Right cardiac atrium (tissue), 5 donors: ENCODE measurements at regions of chr4 and their contacts with region 1.

Region 1: DNA sequence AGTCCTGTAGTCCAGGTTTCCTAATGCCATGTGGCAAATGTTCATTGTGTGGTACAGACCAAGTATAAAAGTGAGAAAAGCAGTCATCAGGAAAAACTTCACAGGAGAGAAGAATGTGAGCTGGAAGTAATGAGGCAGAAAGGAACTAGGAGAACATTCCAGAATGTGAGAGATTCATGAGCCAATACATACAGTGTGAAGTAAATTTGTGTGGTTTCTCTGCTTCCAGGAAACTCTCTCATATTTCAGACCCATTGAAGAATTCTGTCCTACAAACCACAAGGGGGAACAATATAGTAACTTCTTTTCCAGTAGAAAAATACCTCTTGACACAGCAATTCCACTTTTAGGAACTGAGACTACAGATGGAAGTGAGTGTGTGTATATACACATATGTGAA is 136.5 kb downstream of the RNF150 start:
- DNase-seq: no peak
- ATAC-seq: no peak
- H3K4me3 ChIP-seq: no peak overlapping the region
- H3K27ac ChIP-seq: no peak overlapping the region
- H3K4me1 ChIP-seq: peaks cover 3% of the 10 kb centered on the region
- H3K27me3 ChIP-seq: no peaks in the 10 kb centered on the region

Region 2: GRCh38 chr4:141058739-141059512 is 62.2 kb after region 1 on chr4:
- intact Hi-C with region 1: loop called in 1 of 4 experiments (anchors 10 kb)
- DNase-seq: no peak
- ATAC-seq: no peak
- H3K4me3 ChIP-seq: no peak overlapping the region
- H3K27ac ChIP-seq: no peak overlapping the region
- H3K4me1 ChIP-seq: no peaks in the 10 kb centered on the region
- H3K27me3 ChIP-seq: no peaks in the 10 kb centered on the region

Region 3: GRCh38 chr4:141081921-141082395 is 85.2 kb after region 1 on chr4:
- intact Hi-C with region 1: no loop called
- DNase-seq: no peak
- ATAC-seq: no peak
- H3K4me3 ChIP-seq: no peak overlapping the region
- H3K27ac ChIP-seq: no peak overlapping the region
- H3K4me1 ChIP-seq: peaks cover 4% of the 10 kb centered on the region
- H3K27me3 ChIP-seq: no peaks in the 10 kb centered on the region